PC-9 (cell line): ENCODE measurements at regions of chr1 and their contacts with region 1.

Region 1: DNA sequence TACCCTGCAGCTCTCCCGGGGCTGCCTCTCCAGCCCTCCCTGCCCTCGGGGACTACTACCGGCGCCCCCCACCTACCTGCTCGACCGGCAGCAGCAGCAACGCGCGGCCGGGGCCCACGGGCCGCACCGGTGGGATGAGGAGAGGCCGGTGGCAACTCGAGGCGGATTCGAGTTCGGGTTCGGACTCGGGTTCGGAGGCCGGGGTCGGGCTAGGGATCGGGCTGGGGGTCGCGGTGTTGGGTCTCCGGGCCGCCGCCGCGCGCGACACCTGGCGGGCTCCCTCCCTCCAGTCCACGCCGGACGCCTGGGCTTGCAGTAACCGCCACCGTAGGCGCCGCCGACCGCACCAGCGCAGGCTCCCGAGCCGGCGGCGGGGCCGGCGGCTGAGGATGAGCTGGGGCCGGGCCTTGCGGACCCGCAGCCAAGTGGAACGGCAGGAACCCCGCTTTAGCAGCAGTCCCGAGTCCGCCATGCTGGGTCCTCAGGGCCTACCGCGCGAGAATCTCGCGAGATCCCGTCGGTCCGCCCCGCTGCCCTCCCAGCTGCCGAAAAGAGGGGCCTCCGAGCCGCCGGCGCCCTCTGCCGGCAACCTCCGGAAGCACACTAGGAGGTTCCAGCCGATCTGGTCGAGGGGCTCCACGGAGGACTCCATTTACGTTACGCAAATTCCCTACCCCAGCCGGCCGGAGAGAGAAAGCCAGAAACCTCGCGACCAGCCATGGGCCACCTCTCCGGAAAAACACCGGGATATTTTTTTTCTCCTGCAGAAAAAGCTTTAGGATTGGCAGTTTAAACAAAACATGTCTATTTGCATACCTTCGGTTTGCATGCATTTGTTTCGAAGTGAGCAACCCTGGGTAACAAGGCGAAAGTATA is at the start of gene NOL9:
- DNase-seq: peak; percentile 68 to 91
- H3K4me3 ChIP-seq: peak within 1 kb of the TSS; percentile 70
- H3K27ac ChIP-seq: no peak within 1 kb of the TSS
- H3K4me1 ChIP-seq: peaks cover 8% of the 10 kb centered on the region; the same call in 1 of the 2 replicates
- H3K27me3 ChIP-seq: no peaks in the 10 kb centered on the region
- CTCF ChIP-seq: peak; percentile 86
- total RNA-seq, gene NOL9: 17.6 and 28.4 TPM in 2 replicates

Region 2: GRCh38 chr1:6414443-6414844 is 139.8 kb before region 1 on chr1:
- CTCF ChIA-PET with region 1: no interaction called
- POLR2A ChIA-PET with region 1: no interaction called
- intact Hi-C with region 1: no loop called
- DNase-seq: peak; percentile 55 to 82
- H3K4me3 ChIP-seq: no peak overlapping the region
- H3K27ac ChIP-seq: peak overlapping the region; percentile 84
- H3K4me1 ChIP-seq: peaks cover 36% of the 10 kb centered on the region
- H3K27me3 ChIP-seq: no peaks in the 10 kb centered on the region
- CTCF ChIP-seq: peak; percentile 6; the same call in 1 of the 2 replicates

Region 3: GRCh38 chr1:6602669-6603237 is 48.5 kb after region 1 on chr1 and contains the start of gene KLHL21:
- CTCF ChIA-PET with region 1: interaction called, 3 read pairs
- POLR2A ChIA-PET with region 1: no interaction called
- intact Hi-C with region 1: loop called (anchors 1 kb)
- DNase-seq: peak; percentile 54 to 90
- H3K4me3 ChIP-seq: peak within 1 kb of the TSS; percentile 86
- H3K27ac ChIP-seq: peak within 1 kb of the TSS; percentile 84
- H3K4me1 ChIP-seq: no peaks in the 10 kb centered on the region
- H3K27me3 ChIP-seq: no peaks in the 10 kb centered on the region
- CTCF ChIP-seq: no peak
- total RNA-seq, gene KLHL21: 20.6 and 24.4 TPM in 2 replicates

Region 4: GRCh38 chr1:6624710-6625583 is 70.7 kb after region 1 on chr1 and contains the start of gene THAP3:
- CTCF ChIA-PET with region 1: no interaction called
- POLR2A ChIA-PET with region 1: interaction called, 4 read pairs
- intact Hi-C with region 1: loop called (anchors 2 kb)
- DNase-seq: peak; percentile 75 to 82
- H3K4me3 ChIP-seq: peak within 1 kb of the TSS; percentile 65
- H3K27ac ChIP-seq: 0 out of 2 replicates have a peak within 1 kb of the TSS, but pooled peaks have one; percentile 19
- H3K4me1 ChIP-seq: 0 out of 2 replicates have a peak, but pooled peaks cover 8% of the 10 kb centered on the region
- H3K27me3 ChIP-seq: no peaks in the 10 kb centered on the region
- CTCF ChIP-seq: no peak; the same call in 1 of the 2 replicates
- total RNA-seq, gene THAP3: 14.6 and 18.7 TPM in 2 replicates